SK-N-SH (cell line): ENCODE measurements at regions of chr12 and their contacts with region 1.

Region 1: DNA sequence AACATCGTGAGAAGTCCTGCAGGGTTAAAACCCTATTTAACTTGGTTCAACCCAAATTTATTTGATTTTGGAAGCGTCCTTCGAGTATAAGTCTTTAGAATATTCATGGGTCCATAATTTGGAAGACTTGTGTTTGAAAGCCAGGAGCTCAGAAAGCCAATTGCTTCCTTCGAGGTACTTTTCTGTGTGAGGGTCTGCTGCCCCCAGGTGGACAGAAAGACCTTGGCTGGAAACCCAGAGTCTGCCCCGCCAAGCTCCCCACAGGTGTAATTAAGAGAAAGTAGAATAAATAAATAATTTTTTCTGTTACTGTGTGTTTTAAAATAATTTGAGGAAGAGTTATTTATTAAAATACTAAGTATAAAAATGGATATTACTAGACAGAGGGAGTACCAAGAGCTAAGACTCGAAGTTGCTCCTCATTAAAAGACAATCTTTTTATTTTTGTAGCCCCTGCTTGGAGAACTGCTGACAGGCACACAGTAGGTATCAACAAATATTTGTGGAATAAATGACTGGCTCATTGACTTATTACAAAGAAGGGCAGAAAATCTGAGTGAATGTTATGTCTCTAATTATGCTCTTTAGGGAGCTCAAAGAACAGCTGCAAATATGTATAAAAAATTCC is 105.8 kb downstream of the PAH start:
- DNase-seq: peak; percentile 17
- H3K4me3 ChIP-seq: no peak overlapping the region; a peak in 1 of 4 replicates
- H3K27ac ChIP-seq: no peak overlapping the region
- H3K4me1 ChIP-seq: no peaks in the 10 kb centered on the region
- H3K27me3 ChIP-seq: no peaks in the 10 kb centered on the region; the same call in 1 of the 2 replicates
- CTCF ChIP-seq: peak; percentile 71
- EP300 ChIP-seq: no peak
- RAD21 ChIP-seq: peak; percentile 61

Region 2: GRCh38 chr12:101939856-101940265 is 871.4 kb before region 1 on chr12:
- CTCF ChIA-PET with region 1: interaction called, 11 read pairs
- POLR2A ChIA-PET with region 1: no interaction called
- DNase-seq: peak; percentile 57
- H3K4me3 ChIP-seq: no peak overlapping the region; a peak in 1 of 4 replicates
- H3K27ac ChIP-seq: no peak overlapping the region
- H3K4me1 ChIP-seq: peaks cover 3 to 11% of the 10 kb centered on the region in 2 experiments; a peak in 2 of 4 replicates
- H3K27me3 ChIP-seq: no peaks in the 10 kb centered on the region
- CTCF ChIP-seq: peak; percentile 93
- EP300 ChIP-seq: no peak
- RAD21 ChIP-seq: peak; percentile 94

Region 3: DNA sequence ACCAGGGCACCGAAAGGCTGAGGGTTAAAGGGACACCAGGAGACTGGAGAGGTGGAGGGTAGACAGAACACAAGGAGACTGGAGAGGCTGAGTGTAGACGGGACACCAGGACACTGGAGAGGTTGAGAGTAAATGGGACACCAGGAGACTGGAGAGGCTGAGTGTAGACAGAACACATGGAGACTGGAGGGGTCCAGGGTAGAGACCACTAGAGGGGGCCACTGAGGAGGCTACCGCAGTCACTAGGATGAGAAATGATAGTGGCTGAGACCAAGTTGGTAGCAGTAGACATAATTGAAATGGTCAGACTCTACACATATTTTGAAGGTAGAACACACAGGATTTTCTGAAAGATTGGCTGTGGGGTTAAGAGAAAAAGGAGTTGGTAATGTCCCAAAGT is 37.6 kb after region 1 on chr12:
- CTCF ChIA-PET with region 1: no interaction called
- POLR2A ChIA-PET with region 1: no interaction called
- DNase-seq: no peak
- H3K4me3 ChIP-seq: no peak overlapping the region
- H3K27ac ChIP-seq: no peak overlapping the region
- H3K4me1 ChIP-seq: no peaks in the 10 kb centered on the region
- H3K27me3 ChIP-seq: no peaks in the 10 kb centered on the region
- CTCF ChIP-seq: no peak
- EP300 ChIP-seq: no peak
- RAD21 ChIP-seq: no peak

Region 4: GRCh38 chr12:103688376-103689063 is 877.3 kb after region 1 on chr12:
- CTCF ChIA-PET with region 1: no interaction called
- POLR2A ChIA-PET with region 1: no interaction called
- DNase-seq: no peak
- H3K4me3 ChIP-seq: no peak overlapping the region
- H3K27ac ChIP-seq: no peak overlapping the region
- H3K4me1 ChIP-seq: no peaks in the 10 kb centered on the region
- H3K27me3 ChIP-seq: no peaks in the 10 kb centered on the region; the same call in 1 of the 2 replicates
- CTCF ChIP-seq: no peak
- EP300 ChIP-seq: no peak
- RAD21 ChIP-seq: no peak